Activated CD4-positive, alpha-beta memory T cell treated with anti-CD3 and anti-CD28 coated beads for 36 hours (primary cell): ENCODE measurements at regions of chr6 and their contacts with region 1.

Region 1: GRCh38 chr6:4637691-4638433 is 138.3 kb upstream of the CDYL start:
- DNase-seq: peak; percentile 61
- H3K4me3 Mint-ChIP-seq: no peak overlapping the region
- H3K27ac Mint-ChIP-seq: peak overlapping the region; percentile 51
- H3K4me1 Mint-ChIP-seq: peaks cover 21% of the 10 kb centered on the region
- H3K27me3 Mint-ChIP-seq: peaks cover 24% of the 10 kb centered on the region

Region 2: DNA sequence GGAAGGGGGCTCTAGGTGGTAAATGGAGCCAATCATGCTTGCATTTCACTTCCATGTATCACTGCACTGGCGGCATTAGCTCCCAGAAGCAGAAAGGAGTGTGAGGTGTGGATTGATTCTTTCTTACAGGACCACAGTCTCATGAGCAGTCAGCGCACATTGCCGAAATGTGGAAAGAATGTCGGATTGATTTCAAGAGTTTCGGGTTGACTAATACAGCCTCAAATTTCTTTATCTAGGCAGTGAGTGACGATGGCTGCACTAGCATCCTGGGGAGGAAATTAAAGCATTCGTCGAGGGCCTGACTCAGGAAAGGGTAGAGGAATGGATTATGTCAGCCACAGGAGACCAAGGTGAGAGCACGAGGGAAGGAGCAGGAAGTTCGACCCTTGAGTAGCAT is 84.5 kb before region 1 on chr6:
- CTCF ChIA-PET with region 1: no interaction called
- POLR2A ChIA-PET with region 1: no interaction called
- intact Hi-C with region 1: loop called (anchors 5 kb)
- DNase-seq: peak; percentile 51
- H3K4me3 Mint-ChIP-seq: no peak overlapping the region
- H3K27ac Mint-ChIP-seq: no peak overlapping the region
- H3K4me1 Mint-ChIP-seq: peaks cover 4% of the 10 kb centered on the region
- H3K27me3 Mint-ChIP-seq: peaks cover 21% of the 10 kb centered on the region

Region 3: DNA sequence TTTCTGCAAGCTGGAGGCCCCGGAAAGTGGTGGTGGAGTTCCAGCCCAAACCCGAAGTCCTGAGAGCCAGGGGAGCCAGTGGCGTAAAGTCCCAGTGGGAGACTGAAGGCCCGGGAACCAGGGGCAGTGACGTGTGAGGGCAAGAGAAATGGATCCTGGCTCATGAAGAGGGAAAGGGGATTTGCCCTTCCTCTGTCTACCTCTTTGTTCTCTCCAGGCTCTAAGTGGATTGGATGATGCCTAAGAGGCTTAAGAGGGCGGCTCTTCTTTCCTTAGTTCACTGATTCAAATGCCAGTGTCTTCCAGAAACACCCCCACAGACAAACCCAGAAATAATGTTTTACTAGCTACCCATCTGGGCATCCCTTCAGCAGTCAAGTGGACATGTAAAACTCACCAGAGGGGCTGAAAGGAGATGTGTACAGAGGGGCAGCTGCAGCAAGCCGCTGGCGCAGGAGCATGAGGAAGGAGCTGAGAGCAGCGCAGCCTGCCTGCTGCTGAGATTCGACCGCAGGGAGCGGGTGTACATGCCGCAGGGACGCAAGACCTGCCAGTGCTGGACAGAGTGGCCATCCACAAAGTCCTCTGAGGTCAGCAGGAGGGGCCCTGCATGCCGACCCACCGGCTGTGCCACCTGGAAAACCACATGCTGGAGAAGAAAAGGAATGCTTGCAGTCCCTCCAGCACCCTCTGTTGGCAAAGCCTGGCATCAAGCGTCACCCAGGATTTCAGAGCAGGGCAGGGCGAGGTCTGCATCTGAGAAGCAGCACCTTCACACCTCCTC is 167.9 kb after region 1 on chr6:
- CTCF ChIA-PET with region 1: no interaction called
- POLR2A ChIA-PET with region 1: no interaction called
- intact Hi-C with region 1: loop called (anchors 10 kb)
- DNase-seq: peak; percentile 44
- H3K4me3 Mint-ChIP-seq: no peak overlapping the region
- H3K27ac Mint-ChIP-seq: no peak overlapping the region
- H3K4me1 Mint-ChIP-seq: peaks cover 80% of the 10 kb centered on the region
- H3K27me3 Mint-ChIP-seq: no peaks in the 10 kb centered on the region